ENCODE measurements at regions of chr5 and their contacts with region 1.

Region 1: GRCh38 chr5:74919487-74919886 is 53.3 kb upstream of the FAM169A start:
- DNase-seq: peak; percentile 69
- H3K4me3 ChIP-seq: no peak overlapping the region
- H3K27ac ChIP-seq: no peak overlapping the region
- H3K4me1 ChIP-seq: no peaks in the 10 kb centered on the region
- H3K27me3 ChIP-seq: no peaks in the 10 kb centered on the region
- CTCF ChIP-seq: peak; percentile 69
- EP300 ChIP-seq: no peak
- RAD21 ChIP-seq: peak; percentile 80

Region 2: DNA sequence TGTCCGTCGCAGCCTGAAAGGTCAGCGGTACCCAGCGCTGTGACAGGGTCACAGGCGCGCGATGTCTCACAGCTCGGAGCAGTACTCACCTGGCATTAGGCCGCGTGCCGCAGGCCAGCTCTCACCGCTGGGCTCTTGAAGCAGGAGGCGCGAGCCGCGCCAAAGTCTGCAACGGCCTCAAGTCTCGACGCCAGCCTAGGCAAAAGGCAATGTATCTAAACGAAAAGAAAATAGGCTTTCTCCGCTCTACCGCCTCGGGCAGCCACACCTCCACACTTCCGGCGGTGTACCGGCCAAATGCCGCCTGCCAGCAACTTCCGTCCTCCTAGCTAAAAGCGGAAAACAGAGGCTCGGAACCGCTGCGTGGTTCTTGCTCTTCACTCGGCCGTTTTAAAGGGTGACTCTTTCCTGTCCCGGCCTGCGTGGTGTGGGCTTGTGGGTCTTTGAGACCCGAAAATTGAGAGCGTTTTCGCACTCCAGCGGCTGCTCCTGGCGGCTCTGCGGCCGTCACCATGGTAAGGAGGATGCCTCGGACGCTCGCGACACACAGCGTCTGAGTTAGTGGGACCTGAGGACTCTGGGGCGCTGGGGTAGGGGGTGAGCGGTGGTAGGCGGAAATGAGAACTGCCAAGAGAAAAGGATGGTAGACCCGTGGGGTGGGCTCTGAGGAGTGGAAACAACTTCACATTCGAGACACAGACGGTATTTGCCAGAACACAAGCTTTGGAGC is 152.5 kb before region 1 on chr5 and contains the starts of genes GFM2 and NSA2:
- CTCF ChIA-PET with region 1: interaction called, 15 read pairs
- POLR2A ChIA-PET with region 1: no interaction called
- DNase-seq: peak; percentile 80
- H3K4me3 ChIP-seq: peak within 1 kb of the TSS; percentile 98 to 100
- H3K27ac ChIP-seq: peak within 1 kb of the TSS; percentile 67 to 89
- H3K4me1 ChIP-seq: peaks cover 17 to 27% of the 10 kb centered on the region in 2 experiments; a peak in 3 of 4 replicates
- H3K27me3 ChIP-seq: no peaks in the 10 kb centered on the region
- CTCF ChIP-seq: no peak
- EP300 ChIP-seq: peak in 1 of 2 experiments; percentile 14; a peak in 1 of 4 replicates
- RAD21 ChIP-seq: no peak
- polyA plus RNA-seq, gene GFM2: 29.5 and 37.3 TPM in 2 replicates
- polyA plus RNA-seq, gene NSA2: 70.7 and 81.0 TPM in 2 replicates

Region 3: GRCh38 chr5:75395277-75395676 is 475.8 kb after region 1 on chr5:
- CTCF ChIA-PET with region 1: no interaction called
- POLR2A ChIA-PET with region 1: no interaction called
- DNase-seq: no peak
- H3K4me3 ChIP-seq: no peak overlapping the region
- H3K27ac ChIP-seq: no peak overlapping the region
- H3K4me1 ChIP-seq: no peaks in the 10 kb centered on the region
- H3K27me3 ChIP-seq: no peaks in the 10 kb centered on the region
- CTCF ChIP-seq: no peak
- EP300 ChIP-seq: no peak
- RAD21 ChIP-seq: no peak